Mammary epithelial cell (primary cell): ENCODE measurements at regions of chr12 and their contacts with region 1.

Region 1: GRCh38 chr12:11711651-11712327 is 62.3 kb downstream of the ETV6 start:
- DNase-seq: no peak
- H3K4me3 ChIP-seq: no peak overlapping the region
- H3K27ac ChIP-seq: no peak overlapping the region
- H3K4me1 ChIP-seq: peaks cover 12% of the 10 kb centered on the region
- H3K27me3 ChIP-seq: no peaks in the 10 kb centered on the region
- CTCF ChIP-seq: no peak

Region 2: DNA sequence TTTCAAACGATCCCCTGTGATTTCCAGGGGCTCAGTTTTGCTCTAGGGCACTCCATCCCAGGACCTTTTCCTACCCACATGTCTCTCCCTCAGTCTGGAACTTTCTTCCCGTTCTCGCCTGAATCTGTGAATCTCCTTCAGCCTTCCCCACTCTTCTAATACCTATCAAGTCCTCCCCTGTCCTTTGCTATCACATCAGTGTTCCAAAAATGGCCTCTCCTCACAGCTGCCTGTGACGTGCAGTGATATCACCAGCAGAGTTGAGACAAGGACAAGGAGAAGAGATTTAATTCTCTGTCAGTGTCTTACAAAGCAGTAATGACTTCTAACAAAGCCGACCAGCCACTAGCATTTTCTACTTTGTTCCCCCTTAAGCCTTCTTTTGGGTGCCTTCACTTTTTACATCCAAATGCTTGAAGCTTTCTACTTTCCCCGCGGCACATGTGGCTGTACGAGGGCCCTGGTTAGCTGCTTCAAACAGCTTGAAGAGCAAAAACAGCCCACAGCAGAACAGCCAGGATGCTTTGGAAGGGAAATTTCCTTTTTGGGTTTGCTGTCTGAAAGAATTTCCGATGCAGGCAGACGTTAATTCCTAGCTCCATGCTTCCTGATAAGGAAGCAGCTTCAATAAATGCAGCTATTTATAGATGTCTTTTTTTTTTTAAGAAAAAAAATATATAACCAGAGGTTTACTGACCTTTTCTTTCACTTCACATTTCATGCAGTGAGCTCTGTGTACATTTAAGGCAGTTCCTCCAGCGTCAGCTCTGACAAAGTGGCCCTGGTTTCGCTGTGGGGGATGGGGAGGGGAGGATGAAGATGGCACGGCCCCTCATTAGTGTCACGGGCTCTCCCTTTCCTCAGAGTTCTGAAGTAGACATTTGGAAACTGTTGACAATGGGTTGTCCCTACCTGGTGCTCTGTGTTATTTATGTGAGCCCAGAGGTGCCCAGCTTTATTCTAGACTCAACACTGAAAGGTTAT is 47.0 kb after region 1 on chr12:
- CTCF ChIA-PET with region 1: no interaction called
- dilution Hi-C with region 1: loop called (anchors 5 kb)
- in situ Hi-C with region 1: no loop called
- intact Hi-C with region 1: no loop called
- DNase-seq: no peak
- H3K4me3 ChIP-seq: no peak overlapping the region
- H3K27ac ChIP-seq: no peak overlapping the region
- H3K4me1 ChIP-seq: peaks cover 10% of the 10 kb centered on the region
- H3K27me3 ChIP-seq: no peaks in the 10 kb centered on the region
- CTCF ChIP-seq: no peak